Body of pancreas (tissue), 4 donors: ENCODE measurements at regions of chr6 and their contacts with region 1.

Region 1: DNA sequence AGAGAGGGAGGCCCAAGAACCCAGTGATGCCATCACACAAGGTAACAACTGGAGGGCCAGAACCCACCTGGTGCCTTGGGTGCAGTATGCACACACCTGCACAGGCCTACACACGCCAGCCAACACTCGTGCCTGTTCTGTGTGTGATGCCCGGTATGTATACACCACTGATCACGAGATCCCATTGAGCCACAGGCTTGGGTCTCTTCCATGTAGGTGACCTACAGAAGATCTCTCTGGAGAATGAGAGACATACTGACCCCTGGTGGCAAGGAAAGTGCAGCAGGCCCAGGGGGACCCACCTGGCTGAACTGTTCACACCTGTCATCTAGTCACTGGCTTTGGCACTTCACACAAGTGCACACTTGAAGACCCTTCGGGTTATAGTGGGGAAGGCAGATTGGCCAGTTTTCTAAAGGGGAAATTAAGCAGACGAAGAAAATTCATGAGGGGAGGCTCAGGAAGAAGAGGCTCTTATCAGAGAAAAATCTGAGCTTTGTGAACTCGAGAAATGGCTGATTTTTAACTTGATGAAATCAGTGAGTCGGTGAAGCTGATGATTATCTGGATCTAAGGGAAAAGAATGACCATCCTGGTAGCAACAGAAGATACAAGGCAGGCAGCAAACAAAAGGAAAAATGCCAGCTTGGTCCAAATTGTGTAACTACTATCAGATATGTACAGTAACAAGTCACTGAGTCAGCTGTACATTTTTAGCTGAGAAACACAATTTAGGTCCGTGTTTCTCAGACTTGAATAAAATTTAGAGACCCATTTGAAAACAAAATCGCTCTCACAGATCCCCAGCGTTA is 69.1 kb upstream of the PBOV1 start:
- DNase-seq: peak; percentile 81 to 85 (median 82)
- ATAC-seq: peak; percentile 87
- H3K4me3 ChIP-seq: no peak overlapping the region
- H3K27ac ChIP-seq: no peak overlapping the region
- H3K4me1 ChIP-seq: no peaks in the 10 kb centered on the region
- H3K27me3 ChIP-seq: no peaks in the 10 kb centered on the region
- CTCF ChIP-seq: peak; percentile 59 to 82 (median 76)
- POLR2A ChIP-seq: no peak

Region 2: DNA sequence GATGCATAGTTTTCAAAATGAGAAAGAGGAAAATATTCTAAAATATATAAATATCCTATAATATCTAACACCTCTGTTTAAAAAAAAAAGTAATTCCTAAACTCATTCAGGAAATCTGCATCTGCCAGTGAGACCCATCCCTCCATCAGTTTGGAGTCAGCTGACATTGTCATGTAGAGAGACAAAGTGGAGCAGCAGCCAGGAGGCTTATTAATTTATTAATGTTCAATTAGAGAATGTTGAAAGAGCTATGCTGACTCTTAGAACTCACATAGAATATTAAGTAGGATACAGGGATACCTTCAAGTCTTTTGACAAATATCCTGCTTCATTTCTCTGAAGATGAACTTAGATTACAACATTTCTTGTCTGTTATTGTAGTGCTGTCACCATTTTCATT is 167.4 kb before region 1 on chr6:
- intact Hi-C with region 1: loop called (anchors 5 kb)
- DNase-seq: no peak
- ATAC-seq: no peak
- H3K4me3 ChIP-seq: no peak overlapping the region
- H3K27ac ChIP-seq: no peak overlapping the region
- H3K4me1 ChIP-seq: peaks cover 5% of the 10 kb centered on the region
- H3K27me3 ChIP-seq: no peaks in the 10 kb centered on the region
- CTCF ChIP-seq: no peak
- POLR2A ChIP-seq: no peak